Activated naive CD4-positive, alpha-beta T cell treated with anti-CD3 and anti-CD28 coated beads for 36 hours (primary cell): ENCODE measurements at regions of chr3 and their contacts with region 1.

Region 1: DNA sequence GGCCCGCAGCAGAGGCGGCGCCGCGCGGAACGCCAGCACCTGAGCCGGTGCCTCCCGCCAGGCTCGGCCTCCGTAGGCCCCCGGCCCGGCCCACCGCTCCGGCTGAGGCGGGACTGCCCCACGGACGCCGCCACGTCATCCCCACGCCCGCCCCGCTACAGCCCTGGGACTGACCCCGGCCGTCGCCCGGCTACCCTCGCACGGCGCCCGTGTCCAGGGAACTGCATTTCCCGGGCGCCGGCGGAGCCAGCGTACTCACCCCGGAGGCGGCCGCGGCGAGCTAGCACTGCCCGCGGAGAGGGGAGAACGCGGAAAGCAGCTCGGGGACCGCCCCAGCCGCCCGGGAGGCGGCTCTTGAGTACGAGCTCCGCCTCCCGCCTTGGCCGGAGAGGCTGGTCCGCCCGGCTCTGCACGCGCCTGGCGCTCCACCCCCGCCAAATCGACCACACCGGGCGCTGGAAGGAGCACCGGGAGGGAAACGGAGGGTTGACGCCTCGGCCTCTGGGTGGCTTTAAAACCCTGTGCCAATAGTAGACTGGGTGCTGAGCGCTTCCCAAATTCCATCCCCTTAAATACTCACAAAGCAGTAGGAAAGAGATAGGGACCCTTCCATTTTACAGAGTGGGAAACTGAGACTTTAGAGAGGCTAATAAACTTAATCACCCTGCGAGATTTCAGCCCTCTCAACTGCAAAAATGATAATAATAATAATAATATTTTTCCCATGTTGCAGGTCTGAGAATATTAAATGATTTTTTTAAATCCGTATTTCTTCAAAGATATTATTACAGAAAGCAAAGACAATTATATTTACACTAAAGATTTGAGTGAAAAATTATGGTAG is at the start of gene B4GALT4:
- DNase-seq: peak; percentile 70
- H3K4me3 Mint-ChIP-seq: peak within 1 kb of the TSS; percentile 88
- H3K27ac Mint-ChIP-seq: peak within 1 kb of the TSS; percentile 96
- H3K4me1 Mint-ChIP-seq: peaks cover 31% of the 10 kb centered on the region
- H3K27me3 Mint-ChIP-seq: no peaks in the 10 kb centered on the region
- total RNA-seq, gene B4GALT4: 22.0 to 22.8 TPM

Region 2: GRCh38 chr3:118833075-118833474 is 407.7 kb before region 1 on chr3:
- CTCF ChIA-PET with region 1: no interaction called
- intact Hi-C with region 1: no loop called
- DNase-seq: no peak
- H3K4me3 Mint-ChIP-seq: no peak overlapping the region
- H3K27ac Mint-ChIP-seq: no peak overlapping the region
- H3K4me1 Mint-ChIP-seq: no peaks in the 10 kb centered on the region
- H3K27me3 Mint-ChIP-seq: peaks cover 17% of the 10 kb centered on the region

Region 3: GRCh38 chr3:118890186-118890585 is 350.6 kb before region 1 on chr3:
- CTCF ChIA-PET with region 1: interaction called, 53 read pairs
- intact Hi-C with region 1: no loop called
- DNase-seq: no peak
- H3K4me3 Mint-ChIP-seq: no peak overlapping the region
- H3K27ac Mint-ChIP-seq: no peak overlapping the region
- H3K4me1 Mint-ChIP-seq: no peaks in the 10 kb centered on the region
- H3K27me3 Mint-ChIP-seq: no peaks in the 10 kb centered on the region

Region 4: DNA sequence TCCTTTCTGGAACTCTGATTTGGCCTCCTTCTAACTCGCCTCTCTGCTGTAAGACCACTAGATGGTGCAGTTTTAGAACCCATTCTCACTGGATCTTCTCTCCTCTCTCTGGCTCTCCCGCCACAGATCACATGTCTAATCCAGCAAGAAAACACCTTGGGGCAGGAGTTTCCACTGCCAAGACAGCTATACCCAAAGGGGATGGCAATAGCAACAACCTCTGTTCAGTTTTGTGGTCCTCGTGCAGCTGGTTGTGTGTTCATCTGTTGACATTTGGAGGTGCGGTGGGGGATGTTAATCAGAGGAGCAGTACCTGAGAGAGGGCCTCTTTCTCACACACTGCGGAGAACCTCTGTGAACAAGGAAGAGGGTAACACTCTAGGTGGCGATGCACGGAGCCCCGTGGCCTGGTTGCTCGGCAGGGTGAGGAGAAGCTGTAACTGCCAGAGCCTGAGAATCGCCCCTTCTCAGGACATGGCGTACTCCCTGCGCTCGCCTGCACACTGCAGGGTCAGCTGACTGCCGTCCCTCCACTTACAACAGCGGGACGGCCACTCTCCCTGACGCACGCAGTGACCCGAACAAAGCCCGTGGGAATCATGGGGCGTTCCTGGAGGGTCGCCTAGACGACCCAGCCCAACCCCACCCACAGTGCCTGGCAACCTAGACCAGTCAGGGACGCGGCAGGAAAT is 95.2 kb before region 1 on chr3 and contains the start of gene TEX55:
- CTCF ChIA-PET with region 1: interaction called, 89 read pairs
- intact Hi-C with region 1: loop called (anchors 1 kb)
- DNase-seq: peak; percentile 31
- H3K4me3 Mint-ChIP-seq: no peak within 1 kb of the TSS
- H3K27ac Mint-ChIP-seq: no peak within 1 kb of the TSS
- H3K4me1 Mint-ChIP-seq: peaks cover 5% of the 10 kb centered on the region
- H3K27me3 Mint-ChIP-seq: no peaks in the 10 kb centered on the region
- total RNA-seq, gene TEX55: not detected

Region 5: DNA sequence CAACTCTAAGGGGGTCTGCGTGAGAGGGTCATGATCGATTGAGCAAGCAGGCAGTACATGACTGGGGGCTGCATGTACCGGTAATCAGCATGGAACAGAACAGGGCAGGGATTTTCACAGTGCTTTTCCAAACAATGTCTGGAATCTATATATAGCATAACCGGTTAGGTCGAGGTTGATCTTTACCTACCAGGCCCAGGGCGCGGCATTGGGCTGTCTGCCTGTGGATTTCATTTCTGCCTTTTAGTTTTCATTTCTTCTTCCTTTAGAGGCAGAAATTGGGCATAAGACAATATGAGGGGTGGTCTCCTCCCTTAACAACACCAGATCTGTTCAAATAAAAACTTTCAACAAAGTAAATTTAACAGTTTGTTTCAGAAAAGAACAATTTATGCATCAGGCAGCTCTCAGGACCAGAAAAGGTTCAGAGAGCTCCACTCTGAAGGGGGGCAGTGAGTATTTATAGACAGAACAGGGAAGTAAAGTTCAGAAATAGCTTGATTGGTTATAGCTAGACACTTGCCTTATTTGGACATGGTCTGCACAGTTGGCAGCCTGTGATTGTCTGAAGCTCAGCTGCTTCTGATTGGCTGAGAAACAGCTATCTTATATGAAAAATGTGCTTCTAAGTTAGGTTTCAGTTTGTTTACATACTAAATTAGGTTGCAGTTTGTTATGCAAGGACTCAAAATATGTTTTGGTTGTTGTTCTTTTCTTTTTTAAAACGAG is 17.0 kb after region 1 on chr3:
- CTCF ChIA-PET with region 1: interaction called, 18 read pairs
- intact Hi-C with region 1: no loop called
- DNase-seq: no peak
- H3K4me3 Mint-ChIP-seq: no peak overlapping the region
- H3K27ac Mint-ChIP-seq: no peak overlapping the region
- H3K4me1 Mint-ChIP-seq: peaks cover 3% of the 10 kb centered on the region
- H3K27me3 Mint-ChIP-seq: no peaks in the 10 kb centered on the region

Region 6: DNA sequence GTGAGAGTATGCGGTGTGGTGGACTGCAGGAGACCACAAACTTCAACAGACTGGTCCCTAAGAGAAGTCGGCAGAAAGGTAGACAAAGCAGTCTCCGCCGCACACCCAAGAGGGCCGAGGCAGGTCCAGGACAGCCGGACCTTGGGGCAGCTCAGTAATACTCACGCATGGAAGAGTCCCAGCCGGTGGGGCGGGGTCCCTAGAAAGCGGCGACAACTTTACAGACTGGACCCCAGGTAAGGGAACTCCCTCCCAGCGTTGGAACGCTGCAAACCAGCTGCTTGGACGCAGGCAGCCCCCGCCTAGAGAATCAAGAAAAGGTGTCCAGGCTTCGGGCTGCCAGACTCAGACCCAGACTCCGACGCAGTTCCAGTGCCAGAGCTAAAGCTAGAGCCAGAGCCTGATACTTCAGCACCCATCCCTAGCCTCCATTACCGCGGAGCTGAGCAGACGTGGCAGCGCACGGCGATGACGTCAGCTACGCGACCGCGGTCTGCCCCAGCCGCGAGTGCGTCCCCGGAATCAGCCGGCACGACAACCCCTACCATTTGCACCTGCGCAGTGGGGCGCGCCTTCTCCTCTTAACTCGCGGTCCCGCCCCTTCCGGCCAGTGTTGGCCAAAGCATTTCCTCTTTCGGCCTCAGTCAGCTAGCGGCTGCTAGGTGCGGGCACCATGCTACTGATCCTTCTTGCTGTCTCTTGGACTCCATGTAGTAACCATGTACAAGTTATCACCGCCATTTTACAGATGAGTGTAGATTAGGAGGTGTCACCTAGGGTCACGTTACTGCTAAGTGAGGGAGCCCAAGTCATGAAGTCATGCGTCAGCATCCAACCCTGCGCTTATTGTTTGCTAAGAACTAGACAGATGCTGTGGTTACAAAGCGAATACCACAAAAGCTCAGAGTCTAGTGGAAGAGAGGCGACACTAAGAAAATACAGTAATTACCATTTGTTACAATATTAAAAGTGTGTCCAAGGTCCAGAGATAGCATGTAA is 222.7 kb after region 1 on chr3 and contains the start of gene TMEM39A:
- CTCF ChIA-PET with region 1: interaction called, 3 read pairs
- intact Hi-C with region 1: loop called (anchors 2 kb)
- DNase-seq: peak; percentile 98
- H3K4me3 Mint-ChIP-seq: peak within 1 kb of the TSS; percentile 96
- H3K27ac Mint-ChIP-seq: peak within 1 kb of the TSS; percentile 90
- H3K4me1 Mint-ChIP-seq: peaks cover 32% of the 10 kb centered on the region
- H3K27me3 Mint-ChIP-seq: no peaks in the 10 kb centered on the region
- total RNA-seq, gene TMEM39A: 21.4 to 26.9 TPM

Region 7: GRCh38 chr3:119676771-119677640 is 436.2 kb after region 1 on chr3 and contains the start of gene COX17:
- CTCF ChIA-PET with region 1: interaction called, 4 read pairs
- intact Hi-C with region 1: loop called (anchors 1 kb)
- DNase-seq: peak; percentile 97
- H3K4me3 Mint-ChIP-seq: peak within 1 kb of the TSS; percentile 82
- H3K27ac Mint-ChIP-seq: peak within 1 kb of the TSS; percentile 95
- H3K4me1 Mint-ChIP-seq: peaks cover 31% of the 10 kb centered on the region
- H3K27me3 Mint-ChIP-seq: no peaks in the 10 kb centered on the region
- total RNA-seq, gene COX17: 104 to 113 TPM